Breast epithelium (tissue), 4 donors: ENCODE measurements at regions of chr7 and their contacts with region 1.

Region 1: DNA sequence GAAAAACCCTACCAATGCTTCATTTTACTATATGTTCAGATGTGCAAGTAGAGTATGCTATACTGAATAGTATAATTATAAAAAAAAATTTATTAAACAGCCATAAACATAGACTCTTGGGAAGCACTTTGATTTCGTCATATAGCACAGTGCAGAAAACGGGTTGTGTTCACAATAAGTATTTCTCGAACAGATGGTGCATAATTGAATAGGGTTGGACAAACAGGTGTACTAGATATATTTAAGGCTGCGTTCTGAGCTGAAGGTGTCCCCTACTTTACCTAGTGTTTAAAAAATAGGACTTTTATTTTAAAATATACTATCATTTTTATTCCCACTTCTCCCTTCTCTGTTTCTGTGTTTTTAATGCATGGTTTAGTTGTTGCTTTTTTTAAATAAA is 841.5 kb downstream of the ANKRD7 start:
- DNase-seq: no peak
- H3K4me3 ChIP-seq: no peak overlapping the region
- H3K27ac ChIP-seq: no peak overlapping the region
- H3K4me1 ChIP-seq: no peaks in the 10 kb centered on the region
- H3K27me3 ChIP-seq: no peaks in the 10 kb centered on the region
- CTCF ChIP-seq: no peak
- POLR2A ChIP-seq: no peak

Region 2: GRCh38 chr7:119046068-119046467 is 19.9 kb before region 1 on chr7:
- intact Hi-C with region 1: loop called (anchors 1 kb)
- DNase-seq: no peak
- H3K4me3 ChIP-seq: no peak overlapping the region
- H3K27ac ChIP-seq: no peak overlapping the region
- H3K4me1 ChIP-seq: no peaks in the 10 kb centered on the region
- H3K27me3 ChIP-seq: no peaks in the 10 kb centered on the region
- CTCF ChIP-seq: no peak
- POLR2A ChIP-seq: no peak